ENCODE measurements at regions of chr10 and their contacts with region 1.

Region 1: DNA sequence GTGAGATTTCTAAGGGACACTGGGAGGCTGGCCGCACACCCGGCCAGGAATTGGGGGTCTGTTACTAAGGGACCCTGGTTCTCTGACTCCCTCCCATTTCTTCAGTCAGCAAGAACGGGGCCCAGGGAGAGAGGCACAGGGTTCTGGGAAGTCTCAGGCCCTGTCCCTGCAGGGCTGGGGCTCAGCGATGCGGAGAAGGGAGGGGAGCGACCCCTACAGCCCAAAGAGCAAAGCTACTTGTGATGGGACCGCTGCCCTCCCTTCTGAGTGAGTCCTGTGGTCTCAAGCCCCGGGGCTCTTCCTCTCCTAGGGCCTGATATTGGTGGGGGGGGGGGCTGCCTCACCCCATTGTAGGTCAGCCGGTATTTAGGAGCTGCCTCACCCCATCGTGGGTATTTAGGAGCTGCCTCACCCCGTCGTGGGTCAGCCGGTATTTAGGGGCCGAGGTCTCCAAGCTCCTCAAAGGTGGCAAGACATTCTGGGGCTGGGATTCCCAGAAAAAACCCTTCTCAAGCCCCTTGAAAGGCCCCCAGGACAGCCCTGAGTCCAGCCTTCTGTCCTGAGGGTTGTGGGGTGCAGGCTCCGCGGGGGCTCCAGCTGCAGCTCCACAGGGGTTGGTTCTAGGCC is 16.9 kb upstream of the NKX6-2 start:
- DNase-seq: no peak

Region 2: GRCh38 chr10:132886211-132887099 is 83.6 kb after region 1 on chr10:
- intact Hi-C with region 1: no loop called
- DNase-seq: peak; percentile 74

Region 3: GRCh38 chr10:132918617-132919373 is 116.0 kb after region 1 on chr10:
- intact Hi-C with region 1: no loop called
- DNase-seq: peak; percentile 70

Region 4: GRCh38 chr10:133022776-133023100 is 219.9 kb after region 1 on chr10:
- intact Hi-C with region 1: loop called in 1 of 2 experiments (anchors 5 kb)
- DNase-seq: no peak